Sciatic nerve (tissue), 2 donors: ENCODE measurements at regions of chr11 and their contacts with region 1.

Region 1: DNA sequence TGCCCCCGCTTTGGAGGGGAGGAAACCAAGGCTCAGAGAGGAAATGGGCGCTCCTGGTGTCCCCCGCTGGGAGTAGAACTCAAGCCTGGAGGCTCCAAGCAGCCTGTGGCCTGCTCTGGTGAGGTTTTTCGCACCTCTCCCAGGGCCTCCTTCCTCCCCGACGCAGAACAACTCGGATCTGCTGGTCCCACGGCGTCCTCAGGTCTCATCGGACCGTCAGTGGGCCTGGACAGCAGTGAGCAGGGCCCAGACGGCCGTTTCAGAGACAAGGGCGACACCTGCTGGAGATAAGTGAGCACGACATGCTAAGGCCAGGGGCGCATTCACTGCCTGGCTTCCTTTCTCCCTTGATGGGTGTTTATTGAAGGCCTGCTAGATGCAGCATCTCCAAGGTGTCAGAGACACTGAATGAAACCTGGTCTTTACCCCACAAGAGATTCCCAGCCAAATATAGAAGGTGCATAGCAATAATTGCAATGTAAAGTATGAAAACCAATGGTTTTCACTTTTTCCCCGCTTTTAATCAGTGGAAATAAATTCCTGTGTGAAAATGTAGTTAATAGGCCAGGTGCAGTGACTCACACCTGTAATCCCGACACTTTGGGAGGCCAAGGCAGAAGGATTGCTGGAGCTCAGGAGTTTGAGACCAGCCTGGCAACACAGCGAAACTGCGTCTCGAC is 26.9 kb upstream of the CD82 start:
- DNase-seq: peak; percentile 89
- ATAC-seq: peak; percentile 95

Region 2: DNA sequence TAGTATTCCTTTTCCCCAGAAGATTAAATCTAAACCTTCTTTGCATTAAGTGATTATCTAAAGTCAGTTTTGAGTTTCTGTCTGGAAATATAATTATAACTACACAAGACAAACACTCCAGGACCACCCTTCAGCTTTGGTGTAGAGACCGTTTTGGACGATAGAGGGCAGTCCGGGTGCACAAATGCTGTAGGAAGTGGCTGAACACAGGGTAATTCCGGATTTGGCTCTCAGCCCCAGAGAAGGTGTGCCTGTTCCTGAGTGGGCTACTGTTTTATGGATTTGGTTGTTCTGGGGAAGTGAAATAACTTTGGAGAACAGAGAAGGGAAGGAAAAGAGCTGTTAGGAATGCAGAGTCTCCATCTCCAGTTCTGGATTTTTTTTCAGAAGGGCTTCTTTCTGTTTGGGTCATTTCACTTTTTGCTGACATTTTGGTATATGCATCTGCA is 428.3 kb before region 1 on chr11:
- intact Hi-C with region 1: loop called (anchors 10 kb)
- DNase-seq: peak; percentile 70
- ATAC-seq: peak; percentile 79

Region 3: DNA sequence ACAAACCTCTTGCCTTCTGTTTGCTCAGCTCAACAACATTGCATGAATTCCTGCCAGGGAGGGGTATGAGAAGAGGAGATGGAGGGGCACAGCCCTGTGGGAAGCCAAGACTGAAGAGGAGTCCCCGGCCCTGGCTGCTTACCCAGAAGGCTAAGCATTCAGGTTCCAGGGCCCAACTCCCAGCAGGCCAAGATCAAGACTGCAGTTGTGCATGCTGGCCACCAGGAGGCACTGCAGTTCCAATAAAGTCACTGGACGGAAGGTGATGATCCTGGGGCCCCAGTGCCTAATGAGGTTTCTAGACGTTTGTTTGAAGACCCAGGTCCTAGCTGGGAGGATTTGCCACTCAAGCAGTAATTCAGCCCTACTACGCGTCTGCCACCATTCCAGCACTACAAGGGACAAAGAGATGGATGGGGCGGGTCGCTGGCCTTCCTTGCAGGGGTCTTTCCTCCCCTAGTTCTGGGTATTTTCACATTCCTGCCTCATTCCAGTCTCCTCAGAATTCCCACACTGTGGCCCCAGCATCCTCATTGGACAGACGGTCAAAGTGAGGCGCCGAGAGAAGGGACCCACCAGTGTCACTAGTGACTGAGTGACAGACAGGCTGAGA is 252.1 kb before region 1 on chr11:
- intact Hi-C with region 1: loop called (anchors 5 kb)
- DNase-seq: no peak
- ATAC-seq: peak; percentile 72